ENCODE measurements at regions of chr7 and their contacts with region 1.

Region 1: DNA sequence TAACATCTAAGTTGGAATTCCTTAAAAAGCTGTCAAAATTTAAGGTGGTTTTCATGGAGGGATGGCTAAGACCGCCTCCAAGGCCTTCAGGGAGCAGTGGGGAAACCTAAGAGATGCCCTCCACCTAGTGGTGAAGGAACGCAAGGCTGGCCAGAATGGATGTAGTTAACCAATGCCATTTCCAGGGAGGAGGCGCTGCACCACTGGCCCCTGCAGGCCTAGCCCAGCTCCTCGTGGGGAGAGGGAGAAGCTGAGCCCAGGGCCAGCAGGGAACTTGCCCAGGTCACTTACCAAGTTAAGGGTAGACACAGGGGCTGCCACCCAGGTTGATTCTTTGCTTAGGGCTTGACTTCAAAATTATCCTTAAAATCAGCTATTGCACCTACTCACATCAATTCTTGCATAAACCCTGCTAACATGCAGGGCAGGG is 32.0 kb downstream of the FIGNL1 start:
- H3K4me3 Mint-ChIP-seq: no peak overlapping the region
- H3K27ac Mint-ChIP-seq: no peak overlapping the region
- H3K4me1 Mint-ChIP-seq: peaks cover 46% of the 10 kb centered on the region
- H3K27me3 Mint-ChIP-seq: no peaks in the 10 kb centered on the region

Region 2: GRCh38 chr7:50205011-50205410 is 213.1 kb before region 1 on chr7:
- intact Hi-C with region 1: loop called (anchors 2 kb)
- H3K4me3 Mint-ChIP-seq: no peak overlapping the region
- H3K27ac Mint-ChIP-seq: no peak overlapping the region
- H3K4me1 Mint-ChIP-seq: peaks cover 54% of the 10 kb centered on the region
- H3K27me3 Mint-ChIP-seq: no peaks in the 10 kb centered on the region

Region 3: DNA sequence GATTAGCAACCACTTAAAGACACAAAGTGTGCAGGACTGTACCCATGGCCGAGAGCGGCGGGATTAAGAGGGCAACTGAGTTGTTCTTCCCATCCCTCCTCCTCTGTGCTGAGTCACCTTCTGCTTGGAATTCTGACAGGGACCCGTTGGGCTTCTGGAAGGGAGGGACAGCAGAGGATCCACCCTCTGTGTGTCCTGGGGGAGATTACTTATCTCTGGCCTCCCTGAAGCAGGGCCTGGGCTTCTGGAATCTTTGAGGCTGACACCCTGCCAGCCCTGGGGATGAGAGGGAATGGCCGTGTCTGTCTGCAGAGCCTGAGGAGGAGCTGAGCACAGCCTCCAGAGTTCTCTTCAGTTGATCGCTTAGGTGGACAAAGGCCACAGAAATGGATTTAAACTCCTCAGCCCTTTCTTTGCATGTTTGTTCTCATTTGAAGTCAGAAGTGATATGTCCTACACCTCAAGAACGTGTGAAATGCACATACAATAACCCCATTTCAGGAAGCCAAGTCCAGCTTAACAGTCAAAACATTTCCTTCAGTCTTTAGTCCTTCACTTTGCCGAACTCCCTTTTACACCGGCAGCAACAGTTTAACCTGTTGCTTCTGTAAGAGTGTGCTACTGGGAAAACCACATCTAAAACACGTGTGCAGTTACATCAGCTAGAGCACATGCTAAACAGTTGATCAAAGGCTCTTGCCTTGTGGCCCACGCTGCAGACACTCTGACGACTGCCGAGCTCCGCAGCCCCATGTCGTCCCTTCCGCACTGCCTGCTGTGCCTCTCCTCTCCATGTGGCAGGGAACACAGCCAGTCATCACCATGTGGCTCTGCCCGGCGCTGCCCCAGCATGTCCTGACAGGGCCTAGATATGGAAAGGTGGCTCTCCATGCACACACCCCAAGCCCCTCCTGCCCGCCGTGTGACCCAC is 57.8 kb before region 1 on chr7:
- intact Hi-C with region 1: loop called (anchors 5 kb)
- H3K4me3 Mint-ChIP-seq: no peak overlapping the region
- H3K27ac Mint-ChIP-seq: peak overlapping the region; percentile 94
- H3K4me1 Mint-ChIP-seq: peaks cover 76% of the 10 kb centered on the region
- H3K27me3 Mint-ChIP-seq: no peaks in the 10 kb centered on the region

Region 4: GRCh38 chr7:50379082-50379481 is 39.0 kb before region 1 on chr7:
- intact Hi-C with region 1: no loop called
- H3K4me3 Mint-ChIP-seq: no peak overlapping the region
- H3K27ac Mint-ChIP-seq: peak overlapping the region; percentile 71
- H3K4me1 Mint-ChIP-seq: peaks cover 25% of the 10 kb centered on the region
- H3K27me3 Mint-ChIP-seq: no peaks in the 10 kb centered on the region

Measured in dendritic cell treated with granulocyte-macrophage colony-stimulating factor and Interleukin-4, amounts not matched to agents 40 ng/mL and 50 ng/mL, for 4 days (primary cell).